Right ventricle myocardium inferior (tissue), 1 donor: ENCODE measurements at regions of chr4 and their contacts with region 1.

Region 1: DNA sequence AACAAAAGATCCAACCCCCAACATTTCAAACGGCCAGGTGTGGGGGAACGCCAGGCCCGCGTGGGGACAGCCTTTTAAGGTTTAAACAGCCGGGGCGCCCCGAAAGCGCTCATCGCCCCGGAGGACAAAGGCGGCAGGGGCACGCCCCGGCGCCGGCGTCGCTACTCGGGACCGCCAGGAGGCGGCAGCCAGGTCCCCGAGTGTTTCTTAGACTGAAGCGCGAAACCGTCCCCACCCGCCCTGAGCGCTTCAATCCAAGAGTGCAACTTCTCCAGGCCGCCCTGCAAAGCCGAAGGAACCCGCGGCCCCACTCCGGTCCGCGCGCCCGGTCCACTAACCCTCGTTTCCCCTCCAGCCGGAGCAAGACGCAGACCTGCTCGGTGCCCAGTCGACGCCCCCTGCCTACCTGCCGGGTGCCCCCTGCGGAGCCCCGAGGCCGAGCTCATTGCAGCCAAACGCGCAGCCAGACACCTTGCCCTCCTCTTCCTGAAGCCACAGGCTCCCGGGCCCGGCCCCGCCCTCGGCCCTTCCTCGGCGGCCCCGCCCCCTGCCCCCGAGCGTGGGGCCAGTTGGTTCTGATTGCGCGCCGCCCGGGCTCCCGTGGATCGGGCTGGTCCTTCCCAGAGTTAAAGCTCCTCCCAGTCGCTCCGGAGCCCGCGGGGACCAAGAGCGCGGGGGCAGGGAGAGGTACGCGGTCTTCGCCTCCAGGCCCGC is at the start of gene CASP6:
- DNase-seq: peak; percentile 96
- ATAC-seq: peak; percentile 99
- total RNA-seq, gene CASP6: 8.9 TPM

Region 2: GRCh38 chr4:109433205-109434006 is 269.7 kb before region 1 on chr4 and contains the start of gene SEC24B:
- intact Hi-C with region 1: loop called (anchors 5 kb)
- DNase-seq: peak; percentile 96
- ATAC-seq: peak; percentile 96
- total RNA-seq, gene SEC24B: 26.1 TPM

Region 3: GRCh38 chr4:109545401-109545800 is 157.7 kb before region 1 on chr4:
- intact Hi-C with region 1: no loop called
- DNase-seq: no peak
- ATAC-seq: no peak

Region 4: DNA sequence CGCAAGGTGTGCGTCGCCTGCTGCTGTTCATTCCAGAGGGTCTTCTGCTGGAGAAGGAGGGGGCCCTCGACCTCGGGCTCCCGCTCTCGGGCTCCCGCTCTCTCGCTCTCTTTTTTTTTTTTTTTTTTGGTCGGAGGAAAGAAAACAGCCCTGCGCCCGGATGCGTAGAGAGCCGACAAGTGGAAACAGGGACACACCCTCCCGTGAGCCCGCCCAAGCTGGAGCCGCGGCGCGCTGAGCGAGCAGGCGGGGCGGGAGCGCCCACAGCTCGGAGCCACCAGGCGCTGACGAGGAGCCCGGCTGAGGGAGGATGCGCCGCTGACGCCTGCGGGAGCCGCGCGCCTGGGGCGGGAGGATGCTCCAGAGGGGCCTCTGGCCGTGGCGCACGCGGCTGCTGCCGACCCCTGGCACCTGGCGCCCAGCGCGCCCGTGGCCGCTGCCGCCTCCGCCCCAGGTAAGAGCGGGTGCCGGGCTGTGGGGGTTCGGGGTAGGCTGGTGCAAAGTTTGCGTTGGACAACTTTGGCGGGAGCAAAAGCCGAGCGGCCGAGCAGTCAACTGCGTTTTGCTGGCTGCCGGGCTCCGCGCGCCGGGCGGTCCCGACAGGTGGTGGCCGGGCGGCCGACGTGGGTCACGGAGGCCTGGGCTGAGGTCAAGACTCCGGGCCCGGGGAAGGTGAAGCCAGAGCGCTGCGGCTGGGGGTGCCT is 143.0 kb before region 1 on chr4 and contains the start of gene MCUB:
- intact Hi-C with region 1: loop called (anchors 10 kb)
- DNase-seq: peak; percentile 94
- ATAC-seq: peak; percentile 99
- total RNA-seq, gene MCUB: 5.1 TPM

Region 5: GRCh38 chr4:109729718-109730618 is 26.9 kb after region 1 on chr4 and contains the start of gene PLA2G12A:
- intact Hi-C with region 1: loop called (anchors 2 kb)
- DNase-seq: peak; percentile 87
- ATAC-seq: peak; percentile 97
- total RNA-seq, gene PLA2G12A: 64.8 TPM

Region 6: GRCh38 chr4:109749388-109750082 is 46.4 kb after region 1 on chr4:
- intact Hi-C with region 1: no loop called
- DNase-seq: no peak
- ATAC-seq: no peak

Region 7: GRCh38 chr4:109815151-109816081 is 112.3 kb after region 1 on chr4 and contains the start of gene GAR1:
- intact Hi-C with region 1: loop called (anchors 2 kb)
- DNase-seq: peak; percentile 95
- ATAC-seq: peak; percentile 100
- total RNA-seq, gene GAR1: 7.5 TPM